Caco-2 (cell line): ENCODE measurements at regions of chr3 and their contacts with region 1.

Region 1: DNA sequence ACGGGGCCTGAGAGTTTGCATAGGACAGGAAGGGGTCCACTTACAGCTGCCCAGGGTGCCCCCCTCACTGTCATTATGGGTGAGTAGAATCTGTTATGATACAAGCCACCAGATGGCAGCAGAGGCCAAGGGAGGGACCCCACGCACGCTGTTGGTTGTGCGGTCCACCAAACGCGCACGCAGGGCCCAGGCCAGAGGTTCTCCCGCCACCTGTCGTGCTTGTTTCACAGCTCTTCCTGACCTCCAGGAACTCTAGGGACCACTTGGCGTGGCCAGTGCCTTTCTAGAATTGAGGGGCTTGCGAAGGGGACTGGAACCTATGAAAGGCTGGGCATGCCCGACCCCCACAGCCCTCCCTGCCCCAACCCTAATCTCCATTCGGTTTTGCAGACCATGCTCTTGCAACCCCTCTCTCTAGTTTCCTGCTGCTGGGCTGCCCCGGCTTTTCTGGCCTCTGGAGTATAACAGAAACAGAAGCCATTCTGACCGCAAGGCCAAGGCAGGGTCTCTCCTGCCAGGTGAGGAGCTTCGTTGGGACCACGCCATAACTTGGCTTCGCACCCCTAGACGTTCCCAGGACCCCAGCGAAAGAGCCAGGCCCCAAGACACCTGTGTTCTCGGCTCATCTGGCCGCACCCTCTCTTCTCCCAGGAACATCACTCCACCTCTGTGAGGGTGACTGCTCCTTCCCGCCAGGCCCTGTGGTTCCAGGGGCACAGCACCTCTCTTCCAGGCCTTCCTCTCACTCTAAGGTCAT is 46.0 kb downstream of the ALDH1L1 start:
- DNase-seq: peak; percentile 56 to 72
- H3K4me3 ChIP-seq: no peak overlapping the region
- H3K4me3 Mint-ChIP-seq: no peak overlapping the region
- H3K27ac Mint-ChIP-seq: no peak overlapping the region
- H3K4me1 ChIP-seq: no peaks in the 10 kb centered on the region
- H3K4me1 Mint-ChIP-seq: no peaks in the 10 kb centered on the region
- H3K27me3 ChIP-seq: no peaks in the 10 kb centered on the region
- H3K27me3 Mint-ChIP-seq: peaks cover 6% of the 10 kb centered on the region
- CTCF ChIP-seq: peak; percentile 67

Region 2: DNA sequence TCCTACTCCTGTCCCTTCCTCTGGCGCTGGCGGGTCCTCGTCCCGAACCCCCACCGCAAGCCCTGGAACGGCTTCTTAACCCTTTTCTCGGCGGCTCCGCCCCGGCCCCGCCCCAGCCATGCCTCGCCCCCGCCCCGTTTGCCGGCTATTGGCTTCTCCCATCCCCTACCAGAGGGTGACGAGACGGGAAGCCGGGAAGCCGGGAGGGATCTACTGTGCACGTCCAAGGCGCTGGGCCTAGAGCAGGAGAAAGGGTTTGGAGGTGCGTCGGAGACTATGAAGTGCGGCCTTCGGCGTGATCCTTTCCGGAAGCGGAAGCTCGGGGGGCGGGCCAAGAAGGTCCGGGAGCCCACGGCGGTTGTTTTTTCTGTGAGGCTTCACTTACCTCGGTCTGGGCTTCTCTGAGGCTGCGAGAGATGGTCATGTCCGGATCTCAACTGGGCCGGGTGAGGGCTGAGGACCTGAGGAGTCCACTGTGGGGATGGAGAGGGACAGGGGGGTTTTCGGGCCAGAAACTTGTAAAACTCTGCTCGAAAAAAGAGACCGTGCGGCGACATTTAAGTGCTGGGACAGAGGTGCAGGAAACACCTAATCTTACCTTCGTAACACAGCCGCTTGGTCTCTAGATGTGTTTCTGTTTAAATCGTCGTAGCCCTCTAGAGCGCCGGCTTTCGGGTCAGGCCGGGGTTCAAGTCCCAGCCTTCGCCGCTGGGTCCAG is 144.0 kb before region 1 on chr3:
- CTCF ChIA-PET with region 1: no interaction called
- POLR2A ChIA-PET with region 1: no interaction called
- intact Hi-C with region 1: no loop called
- DNase-seq: peak; percentile 86 to 93
- H3K4me3 ChIP-seq: peak overlapping the region; percentile 66
- H3K4me3 Mint-ChIP-seq: peak overlapping the region; percentile 97
- H3K27ac Mint-ChIP-seq: peak overlapping the region; percentile 92
- H3K4me1 ChIP-seq: no peaks in the 10 kb centered on the region
- H3K4me1 Mint-ChIP-seq: no peaks in the 10 kb centered on the region
- H3K27me3 ChIP-seq: no peaks in the 10 kb centered on the region
- H3K27me3 Mint-ChIP-seq: peaks cover 11% of the 10 kb centered on the region
- CTCF ChIP-seq: no peak

Region 3: GRCh38 chr3:126212602-126213378 is 78.4 kb after region 1 on chr3:
- CTCF ChIA-PET with region 1: interaction called, 6 read pairs
- POLR2A ChIA-PET with region 1: no interaction called
- intact Hi-C with region 1: loop called (anchors 10 kb)
- DNase-seq: peak; percentile 49 to 62
- H3K4me3 ChIP-seq: peak overlapping the region; percentile 48
- H3K4me3 Mint-ChIP-seq: peak overlapping the region; percentile 81
- H3K27ac Mint-ChIP-seq: peak overlapping the region; percentile 54
- H3K4me1 ChIP-seq: peaks cover 3% of the 10 kb centered on the region; the same call in 1 of the 2 replicates
- H3K4me1 Mint-ChIP-seq: peaks cover 13% of the 10 kb centered on the region
- H3K27me3 ChIP-seq: no peaks in the 10 kb centered on the region
- H3K27me3 Mint-ChIP-seq: peaks cover 2% of the 10 kb centered on the region
- CTCF ChIP-seq: peak; percentile 15 to 17